ENCODE measurements at regions of chr1 and their contacts with region 1.

Region 1: GRCh38 chr1:32992489-32993323 is 28.1 kb upstream of the RNF19B start:
- DNase-seq: peak; percentile 67
- ATAC-seq: peak; percentile 89
- H3K4me3 Mint-ChIP-seq: peak overlapping the region; percentile 76
- H3K27ac Mint-ChIP-seq: peak overlapping the region; percentile 97
- H3K4me1 Mint-ChIP-seq: peaks cover 64% of the 10 kb centered on the region
- H3K27me3 Mint-ChIP-seq: no peaks in the 10 kb centered on the region
- CTCF ChIP-seq: no peak

Region 2: DNA sequence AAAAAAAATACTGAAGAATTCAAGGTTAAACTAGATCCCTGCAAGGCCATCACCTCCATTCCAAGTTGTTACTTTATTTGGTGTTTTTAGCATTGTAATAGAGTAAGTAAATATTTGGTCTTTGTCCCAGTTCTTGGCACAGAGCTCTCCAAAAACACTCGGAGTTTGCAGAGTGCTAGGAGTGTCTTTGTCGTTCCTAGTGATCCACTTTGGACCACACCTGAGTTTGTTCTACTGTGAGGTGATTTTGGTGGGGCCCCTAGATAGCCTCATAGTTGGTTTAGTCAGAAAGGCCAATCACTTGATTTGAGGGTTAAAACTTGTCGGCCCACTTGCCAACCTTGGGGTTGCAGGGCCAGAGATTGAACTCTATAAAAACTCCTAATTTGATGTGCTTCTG is 315.8 kb before region 1 on chr1:
- CTCF ChIA-PET with region 1: no interaction called
- POLR2A ChIA-PET with region 1: no interaction called
- intact Hi-C with region 1: no loop called
- DNase-seq: no peak
- ATAC-seq: no peak
- H3K4me3 Mint-ChIP-seq: no peak overlapping the region
- H3K27ac Mint-ChIP-seq: no peak overlapping the region
- H3K4me1 Mint-ChIP-seq: no peaks in the 10 kb centered on the region
- H3K27me3 Mint-ChIP-seq: no peaks in the 10 kb centered on the region
- CTCF ChIP-seq: no peak

Region 3: GRCh38 chr1:32958827-32959226 is 33.9 kb before region 1 on chr1:
- CTCF ChIA-PET with region 1: interaction called, 7 read pairs
- POLR2A ChIA-PET with region 1: interaction called, 93 read pairs
- intact Hi-C with region 1: loop called (anchors 1 kb)
- DNase-seq: no peak
- ATAC-seq: no peak
- H3K4me3 Mint-ChIP-seq: peak overlapping the region; percentile 4
- H3K27ac Mint-ChIP-seq: peak overlapping the region; percentile 20
- H3K4me1 Mint-ChIP-seq: peaks cover 83% of the 10 kb centered on the region
- H3K27me3 Mint-ChIP-seq: no peaks in the 10 kb centered on the region
- CTCF ChIP-seq: no peak

Region 4: DNA sequence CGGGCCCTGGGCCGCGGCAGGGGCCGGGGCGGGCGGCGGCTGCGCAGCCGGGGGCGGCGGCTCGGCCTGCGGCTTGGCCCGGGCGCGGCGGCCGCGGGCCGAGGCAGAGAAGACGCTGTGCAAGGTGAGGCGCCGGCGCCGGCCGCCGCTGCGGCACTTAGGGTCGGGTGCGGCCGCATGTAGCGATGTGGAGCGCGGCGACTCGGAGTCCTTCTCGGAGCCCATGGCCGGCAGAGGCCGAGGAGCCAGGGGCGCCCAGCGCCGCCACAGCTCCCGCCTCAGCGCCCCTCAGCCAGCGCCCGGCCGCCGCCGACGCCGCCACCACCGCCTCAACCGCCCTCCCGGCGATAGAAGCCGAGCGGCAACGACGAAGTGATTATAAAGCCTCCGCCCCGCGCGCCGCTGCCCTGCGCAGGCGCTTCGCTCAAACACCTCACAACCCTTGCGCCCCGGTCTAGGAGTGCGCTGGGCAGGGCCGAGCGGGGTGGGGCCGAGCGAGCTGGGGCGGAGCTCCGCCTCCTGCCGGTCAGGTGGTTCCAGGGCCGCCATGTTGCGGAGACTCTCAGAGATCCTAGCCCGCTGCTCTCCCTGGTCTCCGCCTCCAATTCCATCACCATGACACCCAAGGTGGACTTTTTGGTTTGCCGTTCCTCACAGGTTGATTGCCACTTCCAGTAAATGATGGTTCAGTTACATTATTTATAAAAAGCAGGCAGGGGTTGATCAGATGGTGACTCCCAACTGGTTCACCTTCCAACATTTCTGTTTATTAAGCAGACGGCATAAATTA is 28.1 kb before region 1 on chr1 and contains the start of gene RNF19B:
- CTCF ChIA-PET with region 1: interaction called, 8 read pairs
- POLR2A ChIA-PET with region 1: interaction called, 93 read pairs
- intact Hi-C with region 1: loop called (anchors 1 kb)
- DNase-seq: peak; percentile 92
- ATAC-seq: peak; percentile 91
- H3K4me3 Mint-ChIP-seq: peak within 1 kb of the TSS; percentile 90
- H3K27ac Mint-ChIP-seq: peak within 1 kb of the TSS; percentile 91
- H3K4me1 Mint-ChIP-seq: peaks cover 37% of the 10 kb centered on the region
- H3K27me3 Mint-ChIP-seq: no peaks in the 10 kb centered on the region
- CTCF ChIP-seq: no peak
- total RNA-seq, gene RNF19B: 22.7 and 23.6 TPM in 2 replicates

Region 5: DNA sequence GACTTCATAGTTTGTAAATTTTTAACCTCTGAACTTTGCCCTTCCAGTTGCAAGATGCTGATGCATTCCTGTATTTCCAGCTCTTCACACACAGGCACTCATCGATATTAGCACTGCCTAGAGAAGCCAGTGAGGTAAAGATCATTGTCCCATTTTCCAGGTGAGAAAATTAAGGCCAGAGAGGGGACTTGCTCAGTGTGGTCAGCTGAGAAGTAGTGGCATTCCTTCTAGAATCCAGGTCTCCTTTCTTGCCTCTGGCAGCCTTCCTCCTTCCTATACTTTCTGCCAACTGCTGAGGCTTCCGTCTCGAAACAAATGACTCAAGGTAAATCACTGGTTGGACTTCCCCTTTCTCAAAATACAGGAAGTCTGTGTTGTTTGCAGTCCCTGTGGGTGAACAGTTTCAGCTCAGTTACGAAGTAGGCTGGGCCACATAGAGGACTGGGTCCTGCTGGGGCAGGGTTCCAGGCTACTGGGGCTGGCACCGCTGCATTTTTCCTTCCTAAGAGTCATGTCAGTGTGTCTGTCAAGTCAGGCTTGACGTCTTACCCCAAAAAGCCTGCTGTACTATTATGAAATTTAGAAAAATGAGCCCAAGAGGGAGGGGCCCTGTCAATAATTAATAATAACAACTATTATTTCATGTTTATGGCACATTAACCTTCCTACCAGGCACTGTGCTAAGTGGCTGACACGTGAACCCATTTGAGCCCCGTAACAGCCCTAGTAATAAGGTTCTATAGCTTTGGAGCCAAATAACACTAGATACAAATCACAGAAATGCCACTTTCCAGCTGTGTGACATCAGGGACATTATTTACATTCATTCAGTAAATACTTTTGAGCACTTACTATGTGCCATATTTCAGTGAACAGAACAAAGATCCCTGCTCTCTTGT is 11.5 kb before region 1 on chr1:
- CTCF ChIA-PET with region 1: interaction called, 12 read pairs
- POLR2A ChIA-PET with region 1: interaction called, 109 read pairs
- intact Hi-C with region 1: loop called (anchors 1 kb)
- DNase-seq: peak; percentile 46
- ATAC-seq: peak; percentile 93
- H3K4me3 Mint-ChIP-seq: peak overlapping the region; percentile 68
- H3K27ac Mint-ChIP-seq: peak overlapping the region; percentile 89
- H3K4me1 Mint-ChIP-seq: peaks cover 55% of the 10 kb centered on the region
- H3K27me3 Mint-ChIP-seq: no peaks in the 10 kb centered on the region
- CTCF ChIP-seq: no peak

Region 6: DNA sequence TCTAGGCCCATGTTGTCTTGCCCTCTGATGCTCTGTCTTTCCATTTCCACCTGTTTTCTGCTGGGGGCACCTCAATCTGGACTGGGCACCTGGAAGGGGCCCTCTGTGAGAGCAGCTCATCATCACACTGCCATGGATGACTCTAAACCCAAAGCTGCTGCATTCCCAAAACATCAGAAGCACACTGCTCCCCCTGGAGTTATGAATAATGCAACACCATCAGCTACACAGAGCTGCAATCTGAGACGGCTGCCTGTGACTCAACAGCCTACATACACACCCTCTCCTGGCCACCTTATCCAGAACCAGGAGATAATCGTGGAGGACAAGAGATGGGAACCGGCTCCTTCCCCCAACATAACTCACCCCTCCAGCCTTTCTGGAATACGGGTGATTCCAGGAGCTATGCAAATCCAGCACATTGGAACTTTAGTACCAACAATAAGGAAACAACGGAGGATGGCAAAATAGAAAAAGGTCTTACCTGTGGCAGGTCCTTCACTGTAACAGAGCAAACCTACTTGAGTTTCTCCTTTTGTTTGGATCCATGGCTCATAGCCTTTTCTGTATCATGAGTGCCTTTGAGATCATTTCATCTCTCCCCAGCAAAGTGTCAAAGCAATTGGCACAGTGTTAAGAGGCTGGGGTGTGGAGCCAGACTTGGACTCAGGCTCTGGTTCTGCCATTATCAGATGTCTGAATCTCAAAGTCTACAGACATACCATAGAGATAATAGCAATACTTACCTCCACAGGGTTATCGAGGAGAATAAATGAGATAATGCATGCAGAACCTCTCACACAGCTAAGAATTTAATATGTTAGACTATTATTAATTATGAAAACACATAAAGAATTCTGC is 14.7 kb after region 1 on chr1:
- CTCF ChIA-PET with region 1: interaction called, 8 read pairs
- POLR2A ChIA-PET with region 1: interaction called, 11 read pairs
- intact Hi-C with region 1: no loop called
- DNase-seq: no peak
- ATAC-seq: peak; percentile 76
- H3K4me3 Mint-ChIP-seq: no peak overlapping the region
- H3K27ac Mint-ChIP-seq: no peak overlapping the region
- H3K4me1 Mint-ChIP-seq: no peaks in the 10 kb centered on the region
- H3K27me3 Mint-ChIP-seq: no peaks in the 10 kb centered on the region
- CTCF ChIP-seq: no peak

Region 7: DNA sequence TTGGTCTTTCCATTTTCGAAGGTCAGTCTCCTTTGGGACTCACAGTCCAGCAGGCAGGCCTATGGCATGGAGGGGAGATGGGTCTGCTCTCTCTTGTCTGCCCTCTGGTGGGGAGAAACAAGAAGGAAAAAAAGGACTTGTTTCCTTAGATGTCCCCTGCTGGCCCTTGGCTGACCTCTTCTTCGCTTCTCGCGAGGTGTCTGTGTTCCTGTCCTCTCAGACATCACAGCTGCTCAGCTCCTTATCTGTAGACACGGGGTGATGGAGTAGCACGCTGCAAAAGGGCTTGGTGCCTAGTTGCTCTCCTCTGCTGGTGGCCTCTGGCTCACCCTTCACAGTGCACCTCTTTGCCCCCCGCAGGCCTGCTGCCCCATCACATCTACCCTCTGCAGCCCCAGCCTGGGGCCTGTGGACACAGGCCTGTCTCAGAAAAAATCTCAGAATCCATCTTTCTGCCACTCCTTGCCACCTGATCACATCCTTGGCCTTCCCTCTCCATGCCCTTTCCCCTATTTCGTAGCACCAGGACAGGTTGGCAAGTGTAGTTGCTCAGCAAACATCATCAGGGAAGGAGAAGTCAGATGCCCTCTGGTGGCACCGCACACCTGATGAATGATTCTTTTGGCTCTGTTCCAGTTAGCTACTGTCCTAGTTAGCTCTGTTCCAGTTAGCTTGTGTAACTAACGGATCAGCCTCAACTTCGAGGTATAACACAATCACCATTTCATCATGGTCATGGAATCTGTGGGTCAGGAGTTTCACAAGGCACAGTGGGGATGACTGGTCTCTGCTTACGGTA is 62.7 kb after region 1 on chr1:
- CTCF ChIA-PET with region 1: interaction called, 3 read pairs
- POLR2A ChIA-PET with region 1: no interaction called
- intact Hi-C with region 1: loop called (anchors 1 kb)
- DNase-seq: no peak
- ATAC-seq: no peak
- H3K4me3 Mint-ChIP-seq: no peak overlapping the region
- H3K27ac Mint-ChIP-seq: no peak overlapping the region
- H3K4me1 Mint-ChIP-seq: peaks cover 16% of the 10 kb centered on the region
- H3K27me3 Mint-ChIP-seq: no peaks in the 10 kb centered on the region
- CTCF ChIP-seq: no peak

Region 8: DNA sequence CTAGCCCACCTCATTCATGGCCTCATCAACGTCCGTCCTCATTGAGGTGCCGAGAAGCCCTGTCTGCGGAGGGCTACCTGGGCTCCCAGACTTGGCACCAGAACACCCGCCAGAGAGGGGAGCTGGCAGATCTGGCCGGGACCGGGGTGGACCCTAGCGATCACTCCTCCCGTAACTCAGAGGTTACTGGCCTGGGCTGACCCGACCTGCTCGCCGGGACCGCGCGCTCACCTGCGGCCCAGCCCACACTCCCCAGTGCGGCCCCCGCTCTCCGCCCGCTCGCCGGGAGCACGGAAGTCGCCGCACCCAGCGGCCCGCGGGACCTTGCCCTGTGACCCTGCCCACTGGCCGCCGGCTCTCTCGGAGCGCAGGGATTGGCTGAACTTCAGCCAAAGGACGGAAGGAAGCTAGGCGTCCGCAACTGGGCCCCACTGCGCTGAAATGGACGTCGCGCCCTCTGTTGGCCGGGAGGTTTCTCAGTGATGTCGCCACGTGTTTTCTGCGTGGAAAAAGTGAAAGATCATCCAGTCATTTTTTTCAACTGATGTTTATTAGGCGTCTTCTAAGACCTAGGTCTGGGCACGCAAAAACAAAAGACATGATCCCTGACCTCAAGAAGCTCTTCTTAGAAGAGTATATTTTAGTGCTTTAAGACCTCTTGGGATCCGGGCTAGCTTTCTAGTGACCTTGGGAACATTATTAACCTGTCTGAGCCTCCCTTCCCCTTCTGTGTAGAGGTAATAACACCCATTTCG is 1866.9 kb after region 1 on chr1 and contains the start of gene SMIM12:
- CTCF ChIA-PET with region 1: no interaction called
- POLR2A ChIA-PET with region 1: interaction called, 14 read pairs
- intact Hi-C with region 1: no loop called
- DNase-seq: peak; percentile 81
- ATAC-seq: peak; percentile 98
- H3K4me3 Mint-ChIP-seq: peak within 1 kb of the TSS; percentile 94
- H3K27ac Mint-ChIP-seq: peak within 1 kb of the TSS; percentile 82
- H3K4me1 Mint-ChIP-seq: peaks cover 34% of the 10 kb centered on the region
- H3K27me3 Mint-ChIP-seq: no peaks in the 10 kb centered on the region
- CTCF ChIP-seq: no peak
- total RNA-seq, gene SMIM12: 45.9 and 46.3 TPM in 2 replicates

Measured in activated B cell treated with CpG ODN at 0.5 μM for 24 hours (primary cell).